PC-9 (cell line): ENCODE measurements at regions of chr20 and their contacts with region 1.

Region 1: DNA sequence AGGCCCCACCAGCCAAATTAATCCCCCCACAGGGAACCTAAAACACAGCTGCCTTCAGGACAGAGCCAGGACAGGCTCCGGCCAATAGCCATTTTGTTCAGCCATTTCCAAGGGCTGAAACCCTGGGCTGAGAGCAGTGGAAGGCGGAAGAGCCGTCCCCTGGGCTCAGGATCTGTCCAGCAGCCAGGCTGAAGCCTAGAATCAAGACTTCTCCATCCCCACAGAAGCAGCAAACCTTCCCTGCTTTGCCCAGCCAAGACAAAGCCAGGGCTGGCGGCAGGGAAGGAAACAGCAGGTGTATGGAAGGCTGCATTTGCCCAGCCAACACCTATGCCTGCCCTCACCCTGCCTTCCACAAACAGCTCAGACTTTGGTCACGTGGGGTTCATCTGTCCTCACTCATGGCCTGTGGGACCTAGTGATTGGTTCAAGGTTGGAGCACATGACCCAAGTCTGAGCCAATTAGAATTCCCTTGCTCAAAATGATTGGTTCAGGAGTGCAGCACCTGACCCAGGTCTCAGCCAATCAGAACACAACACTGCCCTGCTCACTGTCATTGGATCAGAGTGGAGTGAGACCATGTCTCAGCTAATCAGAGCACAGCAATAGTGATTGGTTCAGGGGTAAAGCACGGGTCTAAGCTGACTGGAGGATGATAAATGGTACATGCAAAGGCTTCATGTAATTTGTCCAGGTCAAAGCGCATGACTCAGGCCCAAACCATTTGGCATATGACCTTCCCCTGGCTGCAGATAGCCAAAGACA is 102.4 kb downstream of the PREX1 start:
- DNase-seq: peak in 1 of 2 experiments; percentile 56
- H3K4me3 ChIP-seq: no peak overlapping the region
- H3K27ac ChIP-seq: no peak overlapping the region
- H3K4me1 ChIP-seq: peaks cover 6% of the 10 kb centered on the region; the same call in 1 of the 2 replicates
- H3K27me3 ChIP-seq: no peaks in the 10 kb centered on the region
- CTCF ChIP-seq: no peak

Region 2: GRCh38 chr20:48668451-48668952 is 56.9 kb before region 1 on chr20:
- CTCF ChIA-PET with region 1: no interaction called
- POLR2A ChIA-PET with region 1: no interaction called
- intact Hi-C with region 1: no loop called
- DNase-seq: peak in 1 of 2 experiments; percentile 65
- H3K4me3 ChIP-seq: no peak overlapping the region
- H3K27ac ChIP-seq: no peak overlapping the region
- H3K4me1 ChIP-seq: peaks cover 6% of the 10 kb centered on the region; the same call in 1 of the 2 replicates
- H3K27me3 ChIP-seq: peaks cover 18% of the 10 kb centered on the region
- CTCF ChIP-seq: no peak

Region 3: DNA sequence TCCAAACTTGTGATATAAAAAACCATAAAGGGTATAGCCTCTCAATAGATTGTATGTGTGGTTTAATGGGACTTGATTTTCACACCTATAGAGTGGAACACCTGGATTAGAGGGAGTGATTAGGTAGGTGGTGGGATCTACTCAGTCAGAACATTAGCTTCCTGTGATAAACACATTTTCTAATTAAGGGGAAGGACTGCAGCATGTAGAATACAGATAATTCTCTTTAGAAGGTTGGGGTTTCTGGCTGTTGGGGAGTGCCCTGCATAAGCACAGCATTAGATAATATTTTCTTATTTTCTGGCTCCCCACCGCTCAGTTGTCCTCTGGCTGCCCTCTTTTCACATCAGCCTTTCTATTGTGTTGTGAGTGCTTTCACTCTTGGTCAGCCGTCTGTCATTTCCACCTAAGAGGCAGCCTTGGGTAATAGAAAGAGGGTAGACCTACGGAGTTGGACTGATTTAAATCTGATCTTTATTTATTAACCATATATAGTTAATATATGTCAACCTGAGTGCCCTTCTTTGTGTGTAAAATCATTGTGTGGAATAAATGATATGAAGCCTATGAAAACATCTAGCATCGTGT is 328.7 kb after region 1 on chr20:
- CTCF ChIA-PET with region 1: interaction called, 11 read pairs
- POLR2A ChIA-PET with region 1: no interaction called
- intact Hi-C with region 1: no loop called
- DNase-seq: no peak
- H3K4me3 ChIP-seq: no peak overlapping the region
- H3K27ac ChIP-seq: peak overlapping the region; percentile 17; the same call in 1 of the 2 replicates
- H3K4me1 ChIP-seq: no peaks in the 10 kb centered on the region; the same call in 1 of the 2 replicates
- H3K27me3 ChIP-seq: no peaks in the 10 kb centered on the region
- CTCF ChIP-seq: no peak